HCT116 (cell line): ENCODE measurements at regions of chr6 and their contacts with region 1.

Region 1: GRCh38 chr6:140897804-140898573 is 1234.7 kb upstream of the GJE1 start:
- DNase-seq: peak; percentile 67
- ATAC-seq: peak; percentile 99
- H3K4me3 ChIP-seq: peak overlapping the region; percentile 73 to 90
- H3K27ac ChIP-seq: peak overlapping the region; percentile 36
- H3K4me1 ChIP-seq: peaks cover 4 to 15% of the 10 kb centered on the region in 2 experiments; a peak in 3 of 4 replicates
- H3K27me3 ChIP-seq: no peaks in the 10 kb centered on the region
- CTCF ChIP-seq: no peak
- POLR2A ChIP-seq: no peak
- RAD21 ChIP-seq: no peak

Region 2: DNA sequence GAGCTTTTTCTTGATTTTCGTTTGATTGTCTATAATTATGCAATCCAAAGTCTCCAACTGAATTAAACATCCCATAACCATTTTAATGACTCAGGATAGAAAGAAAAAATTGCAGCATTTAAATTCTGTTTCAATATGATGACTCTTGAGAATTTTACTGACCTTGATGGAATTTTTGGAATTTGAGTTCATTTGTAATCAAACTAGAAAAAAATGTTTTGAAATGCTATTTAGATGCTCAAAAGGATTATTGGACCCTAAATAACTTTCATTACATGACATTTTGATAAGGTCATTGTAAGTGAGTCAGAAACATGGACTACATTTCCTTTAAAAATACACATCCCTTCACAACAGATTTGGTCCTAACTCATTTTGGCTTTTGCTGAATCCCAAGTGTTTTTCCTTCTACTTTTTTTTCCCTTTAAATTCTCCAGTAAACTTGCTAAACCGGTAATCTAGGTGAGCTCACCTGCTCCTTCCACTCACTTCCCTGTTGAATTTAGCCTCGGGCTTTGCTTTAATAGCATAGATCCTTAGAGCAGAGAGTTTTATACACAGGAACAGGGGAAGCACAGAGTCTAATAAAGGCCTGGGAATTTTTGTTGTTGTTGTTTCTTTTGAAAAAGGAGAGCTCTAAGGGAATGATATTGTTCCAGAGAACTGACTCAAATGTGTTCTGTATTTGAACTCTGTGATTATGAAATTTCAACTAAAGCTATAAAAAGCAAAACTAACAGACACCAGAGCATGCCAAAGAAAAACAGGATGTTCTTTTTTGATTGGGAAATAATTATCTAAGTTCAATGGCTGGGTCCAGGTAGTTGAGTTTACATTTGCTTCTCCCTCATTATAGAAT is 435.3 kb before region 1 on chr6:
- CTCF ChIA-PET with region 1: no interaction called
- POLR2A ChIA-PET with region 1: no interaction called
- RAD21 ChIA-PET with region 1: no interaction called
- intact Hi-C with region 1: loop called (anchors 10 kb)
- DNase-seq: peak; percentile 35
- ATAC-seq: peak; percentile 58; the same call in 1 of the 2 replicates
- H3K4me3 ChIP-seq: no peak overlapping the region
- H3K27ac ChIP-seq: peak overlapping the region; percentile 59
- H3K4me1 ChIP-seq: peaks cover 14 to 17% of the 10 kb centered on the region in 2 experiments; a peak in 3 of 4 replicates
- H3K27me3 ChIP-seq: no peaks in the 10 kb centered on the region
- CTCF ChIP-seq: no peak
- POLR2A ChIP-seq: no peak
- RAD21 ChIP-seq: no peak